ENCODE measurements at regions of chr1 and their contacts with region 1.

Region 1: DNA sequence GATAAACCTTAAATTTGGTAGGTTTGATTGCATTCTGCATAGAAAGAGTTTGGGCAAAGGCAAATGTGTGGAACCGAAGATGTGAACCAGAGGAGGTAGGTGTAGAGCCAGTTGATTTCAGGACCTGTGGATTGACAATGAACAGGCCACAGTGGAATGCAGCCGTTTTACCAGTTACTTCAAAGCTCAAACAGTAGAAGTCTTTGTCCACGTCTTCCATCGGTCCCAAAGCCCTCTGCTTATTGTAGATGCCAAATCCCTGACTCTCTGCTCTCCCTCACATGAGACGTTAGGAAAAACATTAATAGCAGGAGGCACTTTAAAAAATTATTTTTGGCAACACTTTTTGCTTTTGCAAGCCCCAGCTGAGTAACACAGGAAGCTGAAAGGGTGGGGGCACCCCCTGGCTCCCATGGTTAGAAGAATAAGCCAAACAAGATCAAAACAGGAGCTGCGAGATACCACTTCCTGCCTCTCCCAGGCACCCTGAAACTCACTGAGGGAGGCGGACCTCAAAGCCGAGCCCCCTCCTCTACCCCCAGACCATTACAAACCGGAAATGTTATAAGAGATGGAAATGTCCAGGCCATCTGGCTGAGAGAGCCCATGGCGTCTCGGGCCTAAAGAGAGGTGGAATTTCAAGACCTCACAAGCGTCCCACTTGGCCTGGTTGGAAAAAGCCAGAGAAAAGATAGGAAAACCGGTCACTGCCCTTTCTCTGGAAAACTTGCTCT is 13.5 kb downstream of the TRAF3IP3 start:
- DNase-seq: peak; percentile 73
- H3K4me3 Mint-ChIP-seq: no peak overlapping the region
- H3K27ac Mint-ChIP-seq: no peak overlapping the region
- H3K4me1 Mint-ChIP-seq: peaks cover 54% of the 10 kb centered on the region
- H3K27me3 Mint-ChIP-seq: no peaks in the 10 kb centered on the region

Region 2: DNA sequence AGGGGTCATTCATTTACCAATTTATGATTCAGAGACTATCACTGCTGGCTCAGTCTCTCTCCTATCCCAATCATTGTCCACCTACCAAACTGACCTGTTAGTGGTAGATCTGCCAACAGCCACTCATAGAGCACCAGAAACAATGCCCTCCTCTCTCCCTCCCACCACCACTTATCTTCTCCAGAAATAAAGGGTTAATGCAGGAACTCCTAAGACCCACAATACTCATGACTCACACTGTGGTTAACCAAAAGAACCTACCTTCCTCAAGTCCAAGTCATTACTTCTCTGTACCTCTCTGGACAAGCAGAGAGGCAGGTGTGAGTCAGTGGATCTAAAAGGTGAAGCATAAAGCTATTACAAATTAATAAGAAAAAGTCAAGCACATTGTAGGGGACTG is 226.8 kb before region 1 on chr1:
- intact Hi-C with region 1: no loop called
- DNase-seq: no peak
- H3K4me3 Mint-ChIP-seq: no peak overlapping the region
- H3K27ac Mint-ChIP-seq: no peak overlapping the region
- H3K4me1 Mint-ChIP-seq: peaks cover 7% of the 10 kb centered on the region
- H3K27me3 Mint-ChIP-seq: peaks cover 39% of the 10 kb centered on the region

Region 3: DNA sequence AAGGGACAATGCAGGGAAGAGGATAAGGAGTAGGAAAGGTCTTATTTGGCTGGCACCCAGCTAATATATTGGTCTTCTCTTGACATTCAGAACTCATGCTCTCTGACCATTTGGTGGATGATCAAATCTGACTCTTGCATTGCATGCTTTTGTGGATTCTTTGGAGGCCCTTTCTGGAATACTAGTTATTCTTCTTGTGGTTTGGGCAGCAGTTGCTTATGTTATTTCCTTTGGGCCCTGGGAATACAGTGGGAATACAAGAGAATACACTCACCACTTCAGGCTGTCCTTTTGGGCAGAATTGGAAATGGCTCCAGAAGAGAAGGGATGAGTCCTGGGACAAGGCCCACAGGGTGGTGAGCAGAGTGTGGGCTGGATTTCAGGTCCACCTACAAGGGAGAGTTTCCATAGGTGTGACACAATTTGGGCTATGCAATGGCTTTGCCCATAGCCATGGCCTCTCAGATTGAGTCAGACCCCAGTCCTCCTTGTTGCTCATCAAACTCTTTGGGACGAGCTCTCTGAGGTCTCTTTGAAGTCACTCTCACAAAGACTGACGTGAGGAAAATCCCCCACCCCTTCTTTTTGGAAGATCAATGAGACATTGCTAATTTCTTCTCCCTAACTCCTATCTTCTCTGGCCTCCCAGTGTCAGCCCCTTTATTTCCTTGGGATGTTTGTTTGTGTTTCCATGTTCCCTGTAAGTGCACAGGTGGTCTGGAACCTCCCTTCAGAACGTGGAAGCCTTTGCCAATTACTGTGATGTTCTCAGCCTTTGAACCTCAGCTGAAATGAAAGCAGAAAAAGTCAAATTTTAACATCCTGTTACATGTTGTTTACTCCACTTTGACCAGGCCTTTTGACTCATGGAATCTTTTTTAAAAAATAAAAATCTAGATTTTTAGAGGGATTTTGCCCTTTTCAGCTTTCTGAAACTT is 45.3 kb before region 1 on chr1:
- intact Hi-C with region 1: loop called (anchors 1 kb)
- DNase-seq: peak; percentile 16
- H3K4me3 Mint-ChIP-seq: peak overlapping the region; percentile 60
- H3K27ac Mint-ChIP-seq: peak overlapping the region; percentile 100
- H3K4me1 Mint-ChIP-seq: peaks cover 67% of the 10 kb centered on the region
- H3K27me3 Mint-ChIP-seq: no peaks in the 10 kb centered on the region

Region 4: DNA sequence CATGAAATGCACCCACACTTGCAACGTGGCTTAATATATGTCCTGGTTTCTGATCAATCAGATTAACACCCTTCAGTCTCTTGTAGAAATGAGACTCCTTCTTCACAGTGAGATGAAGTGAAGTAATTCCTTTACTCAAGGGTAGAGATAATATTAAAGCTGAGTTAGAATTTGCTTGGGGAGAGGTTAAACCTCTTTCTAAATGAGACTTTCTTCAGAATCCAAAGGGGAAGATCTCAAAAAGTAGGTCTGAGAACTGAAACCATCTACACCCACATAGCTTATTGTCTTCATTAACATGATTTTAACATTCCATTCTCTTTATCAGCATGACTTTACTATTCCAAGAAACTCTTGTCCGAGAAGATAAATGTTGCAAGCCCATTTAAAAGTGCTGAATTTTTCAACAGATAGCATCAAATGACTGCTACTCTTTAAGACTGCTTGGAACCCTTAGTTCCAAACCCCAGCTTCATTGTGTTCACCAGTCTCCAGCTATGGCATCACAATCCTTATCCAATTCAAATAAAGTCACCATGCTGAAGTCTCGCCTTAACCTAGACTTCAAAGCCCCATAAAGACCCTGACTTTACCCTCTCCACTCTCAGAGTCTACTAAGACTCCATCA is 32.7 kb before region 1 on chr1:
- intact Hi-C with region 1: loop called (anchors 1 kb)
- DNase-seq: no peak
- H3K4me3 Mint-ChIP-seq: no peak overlapping the region
- H3K27ac Mint-ChIP-seq: peak overlapping the region; percentile 93
- H3K4me1 Mint-ChIP-seq: peaks cover 54% of the 10 kb centered on the region
- H3K27me3 Mint-ChIP-seq: no peaks in the 10 kb centered on the region

Region 5: DNA sequence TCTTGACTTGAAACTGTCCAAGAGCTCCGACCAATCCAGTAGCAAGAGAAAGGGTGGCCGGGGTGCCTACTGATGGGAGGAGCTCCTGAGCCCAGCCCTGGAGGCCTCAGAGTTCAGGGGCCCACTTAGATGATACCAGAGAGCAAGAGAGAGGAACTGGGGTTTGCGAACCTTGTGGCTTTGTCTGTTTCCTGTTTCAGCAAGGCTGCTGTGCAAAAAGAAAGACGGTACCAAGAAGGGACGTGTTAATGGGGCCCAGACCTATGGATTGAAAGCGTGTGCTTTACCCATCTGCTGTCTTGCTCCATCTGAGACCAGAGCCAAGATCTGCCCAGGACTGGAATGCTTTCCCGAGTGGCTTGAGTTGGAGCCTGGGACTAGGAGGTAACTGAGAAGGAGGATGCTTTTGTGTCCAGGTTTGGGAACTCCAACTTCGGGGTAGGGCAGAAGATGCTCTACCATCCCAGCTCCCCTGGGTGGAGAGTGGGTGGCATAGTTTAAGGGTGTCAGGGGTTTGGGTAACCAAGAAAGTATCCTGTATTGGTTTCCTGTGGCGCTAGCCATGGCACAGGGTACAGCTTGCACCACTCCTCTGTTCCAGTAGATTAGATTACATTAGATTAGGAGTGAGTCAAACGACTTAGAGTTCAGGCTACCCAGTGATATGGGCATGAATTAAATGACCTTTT is 13.3 kb before region 1 on chr1 and contains the start of gene TRAF3IP3:
- intact Hi-C with region 1: loop called (anchors 1 kb)
- DNase-seq: peak; percentile 75
- H3K4me3 Mint-ChIP-seq: peak within 1 kb of the TSS; percentile 97
- H3K27ac Mint-ChIP-seq: peak within 1 kb of the TSS; percentile 97
- H3K4me1 Mint-ChIP-seq: peaks cover 65% of the 10 kb centered on the region
- H3K27me3 Mint-ChIP-seq: no peaks in the 10 kb centered on the region
- total RNA-seq, gene TRAF3IP3: 386 and 390 TPM in 2 replicates

Region 6: GRCh38 chr1:209784265-209785169 is 15.2 kb after region 1 on chr1 and contains the start of gene C1orf74:
- intact Hi-C with region 1: loop called (anchors 1 kb)
- DNase-seq: peak; percentile 99
- H3K4me3 Mint-ChIP-seq: peak within 1 kb of the TSS; percentile 87
- H3K27ac Mint-ChIP-seq: peak within 1 kb of the TSS; percentile 92
- H3K4me1 Mint-ChIP-seq: peaks cover 51% of the 10 kb centered on the region
- H3K27me3 Mint-ChIP-seq: no peaks in the 10 kb centered on the region
- total RNA-seq, gene C1orf74: 2.8 and 3.0 TPM in 2 replicates

Region 7: GRCh38 chr1:209827384-209828262 is 58.3 kb after region 1 on chr1 and contains the start of gene UTP25:
- intact Hi-C with region 1: loop called (anchors 1 kb)
- DNase-seq: peak; percentile 89
- H3K4me3 Mint-ChIP-seq: peak within 1 kb of the TSS; percentile 89
- H3K27ac Mint-ChIP-seq: peak within 1 kb of the TSS; percentile 86
- H3K4me1 Mint-ChIP-seq: peaks cover 47% of the 10 kb centered on the region
- H3K27me3 Mint-ChIP-seq: peaks cover 6% of the 10 kb centered on the region
- total RNA-seq, gene UTP25: 18.7 and 19.6 TPM in 2 replicates

Region 8: DNA sequence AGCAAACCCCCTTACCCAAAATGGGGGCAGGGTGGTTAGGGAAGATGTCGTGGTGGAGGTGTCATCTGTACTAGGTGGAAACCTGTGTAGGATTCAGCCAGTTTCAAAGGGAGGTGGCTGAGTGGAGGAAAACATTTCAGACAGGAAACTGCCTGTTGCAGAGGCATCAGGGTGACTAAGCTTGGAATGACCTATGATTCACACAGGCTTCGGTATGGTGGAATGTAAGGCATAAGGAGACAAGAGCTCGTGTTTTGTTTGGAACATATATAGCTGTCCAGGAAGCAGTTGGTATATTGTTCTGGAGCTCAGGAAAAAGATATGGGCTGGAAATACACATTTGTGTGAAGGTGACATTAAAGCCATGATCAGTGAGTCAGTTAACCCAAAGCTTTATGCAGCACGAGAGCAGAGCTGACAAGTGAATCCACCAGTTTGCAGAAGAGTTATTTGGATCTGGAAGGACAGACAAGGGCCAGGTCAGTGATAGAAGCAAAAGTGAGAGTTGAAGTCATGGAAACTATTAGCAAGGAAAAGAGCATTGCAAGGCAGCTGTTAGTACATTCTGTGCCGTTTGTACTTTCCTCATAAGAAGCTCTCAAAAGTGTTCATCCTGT is 70.6 kb after region 1 on chr1:
- intact Hi-C with region 1: loop called (anchors 2 kb)
- DNase-seq: no peak
- H3K4me3 Mint-ChIP-seq: peak overlapping the region; percentile 49
- H3K27ac Mint-ChIP-seq: peak overlapping the region; percentile 91
- H3K4me1 Mint-ChIP-seq: peaks cover 53% of the 10 kb centered on the region
- H3K27me3 Mint-ChIP-seq: no peaks in the 10 kb centered on the region

Measured in activated T-helper 2 cell treated with anti-CD3 and anti-CD28 coated beads, Interferon-gamma antibody, Interleukin-2, Interleukin-4, amounts not matched to agents 10 μg/mL and 5 μg/mL and 100 μg/mL, durations not matched to agents 14 hours and 24 hours and 36 hours (primary cell).